Mammary epithelial cell (primary cell): ENCODE measurements at regions of chr1 and their contacts with region 1.

Region 1: DNA sequence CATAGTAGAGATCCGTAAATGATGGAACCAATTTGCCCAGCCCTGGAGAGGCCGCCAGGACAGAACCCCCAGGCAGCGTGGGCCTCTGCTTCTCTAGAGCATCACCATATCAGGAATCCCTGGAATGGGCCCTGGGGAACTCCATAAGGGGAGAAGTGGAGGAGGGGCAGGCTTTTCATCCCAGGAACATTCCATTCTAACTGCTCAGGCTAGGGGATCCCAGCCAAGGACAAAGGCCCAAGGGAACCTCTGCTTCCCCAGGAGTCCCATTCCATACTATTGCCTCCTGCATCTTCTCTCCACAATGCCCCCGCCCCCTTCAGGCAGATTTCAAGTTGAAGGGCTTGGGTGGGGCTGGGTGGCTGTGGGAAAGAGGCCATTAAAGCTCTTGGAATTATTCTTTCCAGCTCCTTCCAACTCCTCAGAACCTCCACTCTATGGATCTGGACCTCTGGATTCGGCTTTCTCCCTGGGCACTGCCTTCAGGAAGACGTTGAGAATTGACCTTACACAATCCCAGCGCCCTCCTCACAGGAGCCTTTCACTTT is 6.0 kb downstream of the TRNP1 start:
- DNase-seq: peak; percentile 94
- H3K4me3 ChIP-seq: no peak overlapping the region
- H3K27ac ChIP-seq: peak overlapping the region; percentile 96
- H3K4me1 ChIP-seq: peaks cover 88% of the 10 kb centered on the region
- H3K27me3 ChIP-seq: no peaks in the 10 kb centered on the region
- CTCF ChIP-seq: peak in 1 of 2 donors; percentile 15

Region 2: GRCh38 chr1:26959722-26960615 is 39.5 kb before region 1 on chr1 and contains the start of gene KDF1:
- CTCF ChIA-PET with region 1: no interaction called
- dilution Hi-C with region 1: loop called (anchors 5 kb)
- in situ Hi-C with region 1: no loop called
- intact Hi-C with region 1: no loop called
- DNase-seq: peak; percentile 87
- H3K4me3 ChIP-seq: peak within 1 kb of the TSS; percentile 92 to 99 (median 98)
- H3K27ac ChIP-seq: peak within 1 kb of the TSS; percentile 85
- H3K4me1 ChIP-seq: peaks cover 33% of the 10 kb centered on the region
- H3K27me3 ChIP-seq: no peaks in the 10 kb centered on the region
- CTCF ChIP-seq: no peak
- total RNA-seq, gene KDF1: 15.2 to 24.7 TPM

Region 3: DNA sequence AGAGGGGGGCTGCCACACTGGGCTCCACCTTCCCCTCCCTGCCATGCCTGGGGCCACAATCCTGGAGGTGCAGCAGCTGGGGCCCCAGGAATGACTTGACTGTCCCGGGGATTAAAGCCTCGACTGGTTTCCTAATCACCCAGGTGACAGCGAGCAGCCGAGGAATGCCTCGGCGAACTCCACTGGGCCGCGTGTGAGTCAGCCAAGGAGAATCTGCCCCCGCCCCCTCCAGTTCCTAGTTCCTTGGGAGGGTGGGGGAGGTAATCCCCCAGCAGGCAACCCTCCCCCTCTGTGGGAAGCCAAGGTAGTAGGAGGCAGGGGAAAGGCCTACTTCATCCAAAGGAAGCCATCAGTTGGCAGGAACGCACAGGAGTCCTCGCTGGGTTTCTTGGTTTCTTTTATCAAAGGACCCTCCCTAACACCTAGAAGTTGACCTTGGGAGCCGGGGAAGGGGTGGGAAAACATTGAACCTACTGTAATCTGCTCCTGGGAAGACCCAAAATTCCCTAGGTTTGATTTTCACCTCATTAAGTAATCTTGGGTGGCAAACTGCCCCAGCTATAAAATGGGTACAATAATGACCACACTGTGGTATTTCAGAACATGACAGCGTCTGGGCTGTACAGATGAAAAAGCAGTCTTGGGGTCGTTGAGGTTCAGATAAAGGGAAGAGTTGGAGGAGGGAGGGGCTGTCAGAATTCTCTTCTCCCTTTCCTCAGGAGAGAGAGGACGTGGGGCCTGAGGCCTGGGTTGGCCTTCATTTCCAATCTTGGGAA is 11.7 kb after region 1 on chr1:
- CTCF ChIA-PET with region 1: interaction called, 3 read pairs
- dilution Hi-C with region 1: no loop called
- in situ Hi-C with region 1: no loop called
- intact Hi-C with region 1: loop called (anchors 1 kb)
- DNase-seq: peak; percentile 91
- H3K4me3 ChIP-seq: peak overlapping the region; percentile 40 to 82 (median 61)
- H3K27ac ChIP-seq: peak overlapping the region; percentile 88
- H3K4me1 ChIP-seq: peaks cover 57% of the 10 kb centered on the region
- H3K27me3 ChIP-seq: no peaks in the 10 kb centered on the region
- CTCF ChIP-seq: no peak

Region 4: GRCh38 chr1:27031235-27032118 is 32.0 kb after region 1 on chr1:
- CTCF ChIA-PET with region 1: no interaction called
- dilution Hi-C with region 1: loop called (anchors 5 kb)
- in situ Hi-C with region 1: loop called in 1 of 2 experiments (anchors 5 kb)
- intact Hi-C with region 1: loop called (anchors 1 kb)
- DNase-seq: peak; percentile 86
- H3K4me3 ChIP-seq: peak overlapping the region; percentile 20 to 46 (median 44)
- H3K27ac ChIP-seq: peak overlapping the region; percentile 73
- H3K4me1 ChIP-seq: peaks cover 29% of the 10 kb centered on the region
- H3K27me3 ChIP-seq: no peaks in the 10 kb centered on the region
- CTCF ChIP-seq: peak in 1 of 2 donors; percentile 15

Region 5: GRCh38 chr1:27071049-27071416 is 71.5 kb after region 1 on chr1:
- CTCF ChIA-PET with region 1: no interaction called
- dilution Hi-C with region 1: no loop called
- in situ Hi-C with region 1: no loop called
- intact Hi-C with region 1: no loop called
- DNase-seq: peak; percentile 76
- H3K4me3 ChIP-seq: peak overlapping the region in 1 of 3 experiments; percentile 19
- H3K27ac ChIP-seq: no peak overlapping the region
- H3K4me1 ChIP-seq: peaks cover 15% of the 10 kb centered on the region
- H3K27me3 ChIP-seq: no peaks in the 10 kb centered on the region
- CTCF ChIP-seq: no peak

Region 6: GRCh38 chr1:27097484-27097917 is 98.0 kb after region 1 on chr1:
- CTCF ChIA-PET with region 1: interaction called, 4 read pairs
- dilution Hi-C with region 1: no loop called
- in situ Hi-C with region 1: loop called in 1 of 2 experiments (anchors 5 kb)
- intact Hi-C with region 1: loop called (anchors 1 kb)
- DNase-seq: peak; percentile 70
- H3K4me3 ChIP-seq: no peak overlapping the region
- H3K27ac ChIP-seq: no peak overlapping the region
- H3K4me1 ChIP-seq: peaks cover 34% of the 10 kb centered on the region
- H3K27me3 ChIP-seq: no peaks in the 10 kb centered on the region
- CTCF ChIP-seq: peak; percentile 95